Activated CD4-positive, alpha-beta T cell treated with anti-CD3 and anti-CD28 coated beads for 36 hours (primary cell): ENCODE measurements at regions of chr17 and their contacts with region 1.

Region 1: GRCh38 chr17:68497885-68498319 is 14.3 kb upstream of the PRKAR1A start:
- DNase-seq: no peak
- ATAC-seq: peak; percentile 71
- H3K4me3 Mint-ChIP-seq: no peak overlapping the region
- H3K27ac Mint-ChIP-seq: peak overlapping the region; percentile 73
- H3K4me1 Mint-ChIP-seq: peaks cover 21% of the 10 kb centered on the region
- H3K27me3 Mint-ChIP-seq: peaks cover 2% of the 10 kb centered on the region

Region 2: GRCh38 chr17:68512247-68512982 is 14.5 kb after region 1 on chr17 and contains the start of gene PRKAR1A:
- CTCF ChIA-PET with region 1: interaction called, 4 read pairs
- POLR2A ChIA-PET with region 1: interaction called, 4 read pairs
- intact Hi-C with region 1: loop called in 1 of 2 experiments (anchors 1 kb)
- DNase-seq: peak; percentile 95
- ATAC-seq: peak; percentile 92
- H3K4me3 Mint-ChIP-seq: peak within 1 kb of the TSS; percentile 93
- H3K27ac Mint-ChIP-seq: peak within 1 kb of the TSS; percentile 97
- H3K4me1 Mint-ChIP-seq: peaks cover 42% of the 10 kb centered on the region
- H3K27me3 Mint-ChIP-seq: no peaks in the 10 kb centered on the region
- total RNA-seq, gene PRKAR1A: 165 to 167 TPM